Stomach (tissue), 19 donors: ENCODE measurements at regions of chr2 and their contacts with region 1.

Region 1: GRCh38 chr2:42513257-42513918 is 19.6 kb upstream of the KCNG3 start:
- DNase-seq: peak; percentile 37 to 75
- H3K4me3 ChIP-seq: no peak overlapping the region
- H3K27ac ChIP-seq: no peak overlapping the region
- H3K4me1 ChIP-seq: no peaks in the 10 kb centered on the region
- H3K27me3 ChIP-seq: no peaks in the 10 kb centered on the region
- CTCF ChIP-seq: peak in 5 of 7 experiments; percentile 47 to 83 (median 60)
- EP300 ChIP-seq: no peak
- POLR2A ChIP-seq: no peak

Region 2: GRCh38 chr2:42314892-42315467 is 198.4 kb before region 1 on chr2:
- intact Hi-C with region 1: no loop called
- DNase-seq: no peak
- H3K4me3 ChIP-seq: no peak overlapping the region
- H3K27ac ChIP-seq: no peak overlapping the region
- H3K4me1 ChIP-seq: peaks cover 0 to 16% (median 7%) of the 10 kb centered on the region in 4 donors
- H3K27me3 ChIP-seq: no peaks in the 10 kb centered on the region
- CTCF ChIP-seq: no peak
- EP300 ChIP-seq: no peak
- POLR2A ChIP-seq: no peak

Region 3: DNA sequence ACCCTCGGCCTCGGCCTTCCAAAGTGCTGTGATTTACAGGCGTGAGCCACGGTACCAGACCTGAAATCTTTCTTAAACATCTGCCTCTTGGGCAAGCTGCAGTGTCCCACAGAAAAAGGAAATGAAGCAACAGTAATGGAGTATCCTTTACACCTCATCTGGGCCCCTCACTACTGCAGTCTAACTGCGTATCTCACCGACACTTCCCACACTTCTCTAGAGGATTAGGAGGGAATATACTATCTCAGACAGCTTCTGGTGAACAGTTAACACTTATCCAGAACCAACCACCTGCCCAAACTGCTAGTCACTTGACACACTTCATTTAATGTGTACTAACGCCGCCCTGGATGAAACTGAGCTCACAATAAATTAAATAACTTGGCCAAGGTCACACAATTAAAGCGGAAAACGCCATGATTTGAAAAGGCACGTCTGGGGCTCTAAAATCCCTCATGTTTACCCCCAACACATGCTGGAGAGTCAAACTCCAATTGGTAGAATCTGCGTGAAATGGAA is 153.4 kb before region 1 on chr2:
- intact Hi-C with region 1: no loop called
- DNase-seq: peak in 1 of 2 donors; percentile 46
- H3K4me3 ChIP-seq: peak overlapping the region; percentile 77 to 91 (median 85)
- H3K27ac ChIP-seq: peak overlapping the region in 4 of 5 donors; percentile 93 to 96 (median 96)
- H3K4me1 ChIP-seq: peaks cover 19 to 60% (median 42%) of the 10 kb centered on the region in 4 donors
- H3K27me3 ChIP-seq: no peaks in the 10 kb centered on the region
- CTCF ChIP-seq: no peak
- EP300 ChIP-seq: no peak
- POLR2A ChIP-seq: no peak

Region 4: GRCh38 chr2:42663106-42663780 is 149.9 kb after region 1 on chr2:
- intact Hi-C with region 1: loop called (anchors 5 kb)
- DNase-seq: peak; percentile 71 to 92
- H3K4me3 ChIP-seq: no peak overlapping the region
- H3K27ac ChIP-seq: no peak overlapping the region
- H3K4me1 ChIP-seq: peaks cover 0 to 17% (median 6%) of the 10 kb centered on the region in 4 donors
- H3K27me3 ChIP-seq: no peaks in the 10 kb centered on the region
- CTCF ChIP-seq: peak in 5 of 7 experiments; percentile 89 to 97 (median 95)
- EP300 ChIP-seq: no peak
- POLR2A ChIP-seq: no peak